ENCODE measurements at regions of chr12 and their contacts with region 1.

Region 1: GRCh38 chr12:47350062-47350408 is 270.3 kb upstream of the AMIGO2 start:
- DNase-seq: no peak
- H3K4me3 Mint-ChIP-seq: peak overlapping the region; percentile 74
- H3K27ac Mint-ChIP-seq: peak overlapping the region; percentile 98
- H3K4me1 Mint-ChIP-seq: peaks cover 54% of the 10 kb centered on the region
- H3K27me3 Mint-ChIP-seq: no peaks in the 10 kb centered on the region

Region 2: DNA sequence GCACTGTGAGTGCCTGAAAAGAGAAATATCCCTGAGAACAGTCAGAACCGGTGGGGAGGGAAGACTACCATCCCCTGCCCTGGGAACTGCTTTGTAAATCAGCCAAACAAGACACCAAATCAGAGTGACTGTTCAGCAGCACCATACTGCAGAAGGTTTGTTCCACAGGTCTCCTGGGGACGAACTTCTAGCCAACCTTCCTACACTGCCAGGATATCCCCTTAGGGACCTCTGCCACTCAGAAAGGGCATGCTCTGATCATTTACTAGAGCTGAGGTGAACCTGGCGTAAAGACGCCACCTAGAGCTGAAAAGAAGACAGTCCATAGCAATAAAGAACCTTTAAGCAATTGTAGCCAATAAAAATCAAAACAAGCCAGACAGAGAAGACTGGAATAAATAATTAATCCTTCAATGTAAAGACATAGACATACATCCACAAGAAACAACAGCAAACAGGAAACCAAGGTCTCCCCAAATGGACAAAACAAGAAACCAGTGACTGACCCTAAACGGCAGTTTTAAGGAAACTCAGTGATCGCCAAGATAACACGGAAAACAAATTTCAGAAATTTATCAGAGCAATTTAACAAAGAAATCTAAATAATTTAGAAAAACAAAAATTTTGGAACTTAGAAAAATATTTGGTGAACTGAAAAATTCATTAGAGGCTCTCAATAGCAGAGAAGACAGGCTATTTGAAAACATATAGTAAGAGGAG is 42.2 kb before region 1 on chr12:
- intact Hi-C with region 1: loop called (anchors 2 kb)
- DNase-seq: peak; percentile 43
- H3K4me3 Mint-ChIP-seq: peak overlapping the region; percentile 91
- H3K27ac Mint-ChIP-seq: peak overlapping the region; percentile 87
- H3K4me1 Mint-ChIP-seq: peaks cover 69% of the 10 kb centered on the region
- H3K27me3 Mint-ChIP-seq: no peaks in the 10 kb centered on the region

Region 3: GRCh38 chr12:47328831-47329545 is 21.0 kb before region 1 on chr12:
- intact Hi-C with region 1: loop called (anchors 2 kb)
- DNase-seq: no peak
- H3K4me3 Mint-ChIP-seq: no peak overlapping the region
- H3K27ac Mint-ChIP-seq: peak overlapping the region; percentile 47
- H3K4me1 Mint-ChIP-seq: peaks cover 24% of the 10 kb centered on the region
- H3K27me3 Mint-ChIP-seq: no peaks in the 10 kb centered on the region